Calu3 (cell line): ENCODE measurements at regions of chr2 and their contacts with region 1.

Region 1: GRCh38 chr2:24957221-24957620 is 14.5 kb downstream of the DNAJC27 start:
- DNase-seq: no peak
- H3K4me3 Mint-ChIP-seq: no peak overlapping the region
- H3K27ac Mint-ChIP-seq: no peak overlapping the region
- H3K4me1 Mint-ChIP-seq: no peaks in the 10 kb centered on the region
- H3K27me3 Mint-ChIP-seq: no peaks in the 10 kb centered on the region
- CTCF ChIP-seq: no peak

Region 2: GRCh38 chr2:24336812-24337211 is 620.4 kb before region 1 on chr2:
- CTCF ChIA-PET with region 1: interaction called, 11 read pairs
- intact Hi-C with region 1: no loop called
- DNase-seq: no peak
- H3K4me3 Mint-ChIP-seq: no peak overlapping the region
- H3K27ac Mint-ChIP-seq: no peak overlapping the region
- H3K4me1 Mint-ChIP-seq: peaks cover 49% of the 10 kb centered on the region
- H3K27me3 Mint-ChIP-seq: no peaks in the 10 kb centered on the region
- CTCF ChIP-seq: no peak

Region 3: DNA sequence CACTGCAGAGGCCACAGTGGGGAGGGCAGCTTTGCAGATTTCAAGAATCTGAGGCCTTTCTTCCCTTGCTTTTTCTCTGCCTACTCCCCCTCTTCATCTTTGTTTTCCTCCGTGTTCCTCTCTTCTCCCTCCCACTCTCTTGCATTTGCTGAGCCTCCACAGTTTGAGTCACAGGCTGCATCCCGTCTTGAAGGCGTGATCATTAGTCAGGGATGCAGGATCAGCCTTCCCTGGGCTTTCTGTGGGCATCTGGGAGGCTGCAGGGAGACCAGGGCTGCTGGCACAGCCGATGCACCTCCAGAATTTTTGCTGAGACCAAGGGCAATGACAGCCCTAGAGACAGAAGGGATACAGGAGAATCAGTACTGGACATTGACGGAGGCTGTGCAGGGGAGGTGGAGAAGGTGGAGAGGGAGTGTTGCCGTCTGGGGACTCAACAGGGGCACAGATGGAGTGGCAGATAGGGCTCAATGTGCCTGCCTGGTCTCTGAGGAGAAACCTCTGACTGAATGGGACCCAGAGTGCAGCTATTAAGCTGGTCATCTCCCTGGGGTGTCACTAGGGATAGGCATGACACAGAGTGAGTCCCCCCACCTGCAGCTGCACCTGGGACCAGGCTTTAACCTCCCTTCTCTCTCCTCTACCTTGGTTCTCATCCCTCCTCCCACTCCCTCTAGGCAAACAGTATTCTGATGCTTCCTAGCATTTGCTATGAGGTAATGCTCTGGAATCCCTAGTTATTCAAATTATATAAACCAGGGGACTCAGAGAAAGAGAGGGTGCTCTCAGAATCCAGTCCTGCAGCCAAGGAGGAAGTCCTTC is 43.5 kb after region 1 on chr2:
- CTCF ChIA-PET with region 1: no interaction called
- intact Hi-C with region 1: no loop called
- DNase-seq: no peak
- H3K4me3 Mint-ChIP-seq: no peak overlapping the region
- H3K27ac Mint-ChIP-seq: no peak overlapping the region
- H3K4me1 Mint-ChIP-seq: peaks cover 8% of the 10 kb centered on the region
- H3K27me3 Mint-ChIP-seq: peaks cover 26% of the 10 kb centered on the region
- CTCF ChIP-seq: no peak